Right cardiac atrium (tissue), 5 donors: ENCODE measurements at regions of chr9 and their contacts with region 1.

Region 1: GRCh38 chr9:25636026-25636425 is 42.2 kb downstream of the TUSC1 start:
- DNase-seq: no peak
- ATAC-seq: no peak
- H3K4me3 ChIP-seq: no peak overlapping the region
- H3K27ac ChIP-seq: no peak overlapping the region
- H3K4me1 ChIP-seq: no peaks in the 10 kb centered on the region
- H3K27me3 ChIP-seq: no peaks in the 10 kb centered on the region

Region 2: DNA sequence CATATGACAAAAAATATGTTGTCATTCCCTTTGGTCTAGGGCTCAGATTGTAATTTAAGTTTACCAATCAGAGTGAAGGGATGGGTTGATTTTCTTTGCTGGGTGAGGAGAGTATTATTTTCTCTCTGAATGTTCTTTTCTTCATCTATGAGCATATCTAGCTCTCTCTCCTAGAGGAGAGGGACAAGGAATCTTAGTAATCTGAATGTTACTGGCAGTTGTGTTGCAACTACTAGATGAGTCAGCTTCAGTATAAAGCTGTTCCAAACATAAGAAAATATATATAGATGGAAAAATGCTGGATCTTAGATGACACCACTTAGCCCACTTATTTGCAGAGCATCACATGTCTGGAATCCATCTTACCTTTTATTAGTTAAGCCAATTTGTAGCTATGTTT is 217.1 kb before region 1 on chr9:
- intact Hi-C with region 1: no loop called
- DNase-seq: no peak
- ATAC-seq: no peak
- H3K4me3 ChIP-seq: no peak overlapping the region
- H3K27ac ChIP-seq: no peak overlapping the region
- H3K4me1 ChIP-seq: no peaks in the 10 kb centered on the region
- H3K27me3 ChIP-seq: no peaks in the 10 kb centered on the region

Region 3: DNA sequence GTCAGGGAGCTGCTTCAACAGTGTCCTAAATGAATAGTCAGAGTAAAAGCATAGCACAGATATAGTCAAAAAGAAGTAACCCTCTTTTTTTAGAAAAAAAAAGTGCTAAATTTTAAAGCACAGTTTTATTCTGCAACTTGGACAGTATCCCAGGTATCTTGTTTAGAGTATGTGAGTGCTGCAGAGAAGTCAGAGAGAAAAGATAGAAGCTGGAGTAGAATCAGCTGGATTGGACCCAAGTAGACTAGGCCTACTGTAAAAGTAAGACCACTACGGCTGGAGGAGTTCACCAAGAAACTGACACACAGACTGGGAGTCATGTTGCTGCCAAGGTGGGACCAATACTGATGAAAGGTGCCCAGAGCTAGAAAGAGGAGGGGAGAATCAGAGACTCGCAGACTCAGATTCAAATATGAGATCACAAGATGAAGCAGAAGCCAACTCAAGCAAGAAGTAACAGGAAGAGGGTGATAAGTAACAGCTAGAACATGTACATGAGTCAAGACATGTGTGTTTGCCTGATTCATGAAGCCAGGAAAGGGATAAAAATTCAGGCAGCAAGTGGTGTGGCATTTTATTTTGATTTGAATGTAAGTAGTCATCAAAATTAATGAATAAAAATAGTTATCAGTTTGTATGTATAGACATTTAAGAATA is 67.8 kb after region 1 on chr9:
- intact Hi-C with region 1: loop called in 1 of 4 experiments (anchors 10 kb)
- DNase-seq: no peak
- ATAC-seq: no peak
- H3K4me3 ChIP-seq: no peak overlapping the region
- H3K27ac ChIP-seq: no peak overlapping the region
- H3K4me1 ChIP-seq: no peaks in the 10 kb centered on the region
- H3K27me3 ChIP-seq: no peaks in the 10 kb centered on the region